HEK293T (cell line): ENCODE measurements at regions of chr4 and their contacts with region 1.

Region 1: DNA sequence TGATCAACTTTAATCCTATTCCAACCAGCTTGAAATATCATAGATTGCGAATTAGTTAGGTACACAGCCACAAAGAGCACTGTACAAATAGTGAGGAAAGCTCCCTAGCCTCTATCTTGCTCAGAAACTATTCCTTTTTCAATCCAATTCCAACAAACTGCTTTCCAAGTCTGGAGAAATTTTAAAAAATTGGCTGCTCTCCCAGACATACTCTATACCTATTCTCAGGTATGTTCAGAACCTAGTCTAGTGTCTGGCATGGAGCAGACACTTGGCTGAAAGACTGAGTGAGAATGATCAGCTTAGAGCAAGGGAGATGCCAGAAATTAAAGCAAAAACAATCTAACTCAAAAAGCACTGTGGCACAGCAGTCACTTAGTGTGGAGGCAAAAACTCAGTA is 105.9 kb downstream of the SLC10A7 start:
- DNase-seq: no peak

Region 2: GRCh38 chr4:145523117-145523516 is 892.7 kb before region 1 on chr4:
- CTCF ChIA-PET with region 1: interaction called, 10 read pairs
- POLR2A ChIA-PET with region 1: no interaction called
- DNase-seq: no peak